ENCODE measurements at regions of chr7 and their contacts with region 1.

Region 1: DNA sequence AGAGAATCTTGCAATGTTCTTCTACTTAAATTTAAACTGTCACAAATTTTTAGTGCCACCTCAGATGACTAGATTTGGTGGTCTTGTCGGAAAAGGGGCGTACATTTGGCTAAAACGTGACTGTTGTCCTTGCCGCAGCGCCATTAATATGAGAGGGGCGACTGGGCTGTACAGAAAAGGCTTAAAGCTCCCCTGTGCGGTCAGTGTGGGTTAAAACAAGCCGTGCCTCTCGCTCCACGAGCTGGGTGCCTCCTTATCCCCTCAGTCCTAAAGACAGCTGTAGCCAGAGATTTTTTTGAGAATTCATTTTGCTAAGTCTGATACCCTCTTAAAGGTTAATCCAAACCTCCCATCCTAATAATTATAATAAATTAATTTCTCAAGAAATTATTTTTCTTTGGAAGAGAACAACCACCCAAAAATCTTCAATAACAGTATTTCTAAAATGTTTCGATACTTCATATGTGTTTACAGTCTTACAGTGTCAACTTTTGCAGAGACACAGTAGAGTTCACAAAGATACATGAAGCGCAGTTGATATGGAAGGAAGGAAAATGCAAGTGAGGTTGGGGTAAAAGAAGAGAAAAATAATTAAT is 68.6 kb downstream of the C7orf25 start:
- DNase-seq: peak; percentile 45
- H3K4me3 Mint-ChIP-seq: no peak overlapping the region
- H3K27ac Mint-ChIP-seq: no peak overlapping the region
- H3K4me1 Mint-ChIP-seq: no peaks in the 10 kb centered on the region
- H3K27me3 Mint-ChIP-seq: peaks cover 17% of the 10 kb centered on the region

Region 2: DNA sequence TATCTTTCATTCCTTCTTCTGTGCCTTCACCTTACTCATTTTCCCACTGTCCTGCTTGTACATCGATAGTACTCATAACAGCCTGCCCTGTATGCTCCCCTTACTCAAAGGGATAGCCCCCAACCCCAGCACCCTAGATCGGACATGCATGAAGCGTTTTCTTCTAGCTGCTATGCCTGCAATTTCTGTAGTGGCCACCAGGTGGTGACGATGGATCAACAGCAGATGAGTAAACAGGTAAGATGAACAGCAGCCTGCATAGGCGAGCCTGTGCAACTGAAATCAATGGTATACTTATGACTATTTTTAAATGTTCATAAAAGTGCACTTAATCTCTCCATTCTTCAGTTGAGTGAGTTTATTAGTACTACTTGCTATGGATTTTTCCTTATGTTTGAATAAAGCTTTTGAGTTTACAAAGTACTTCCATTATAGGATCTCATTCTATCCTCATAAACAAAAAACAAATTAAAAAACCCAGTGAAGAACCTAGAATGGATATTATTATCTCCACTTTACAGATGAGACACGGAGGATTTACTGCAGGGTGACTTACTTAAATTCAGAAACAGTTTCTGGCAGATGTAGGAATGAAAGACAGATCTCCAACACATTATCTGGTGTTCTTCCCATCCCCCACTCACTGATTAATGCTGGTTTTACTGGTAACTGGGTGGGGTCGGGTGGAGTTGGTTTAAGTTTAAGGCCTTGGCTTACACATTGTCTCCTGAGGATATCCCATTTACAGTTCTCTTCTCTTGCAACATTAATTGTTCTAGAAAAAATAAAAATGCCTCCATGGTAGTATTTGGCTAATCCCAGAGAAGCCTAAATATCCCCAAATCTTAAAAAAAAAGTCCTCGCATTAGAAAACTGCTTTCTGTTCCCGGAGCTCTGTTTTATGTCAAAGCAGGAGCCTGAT is 828.4 kb before region 1 on chr7:
- CTCF ChIA-PET with region 1: interaction called, 3 read pairs
- intact Hi-C with region 1: loop called (anchors 1 kb)
- DNase-seq: peak; percentile 65
- H3K4me3 Mint-ChIP-seq: no peak overlapping the region
- H3K27ac Mint-ChIP-seq: no peak overlapping the region
- H3K4me1 Mint-ChIP-seq: no peaks in the 10 kb centered on the region
- H3K27me3 Mint-ChIP-seq: peaks cover 17% of the 10 kb centered on the region

Region 3: GRCh38 chr7:42550706-42551470 is 292.4 kb before region 1 on chr7:
- CTCF ChIA-PET with region 1: no interaction called
- intact Hi-C with region 1: no loop called
- DNase-seq: no peak
- H3K4me3 Mint-ChIP-seq: no peak overlapping the region
- H3K27ac Mint-ChIP-seq: no peak overlapping the region
- H3K4me1 Mint-ChIP-seq: no peaks in the 10 kb centered on the region
- H3K27me3 Mint-ChIP-seq: no peaks in the 10 kb centered on the region